ENCODE measurements at regions of chr20 and their contacts with region 1.

Region 1: DNA sequence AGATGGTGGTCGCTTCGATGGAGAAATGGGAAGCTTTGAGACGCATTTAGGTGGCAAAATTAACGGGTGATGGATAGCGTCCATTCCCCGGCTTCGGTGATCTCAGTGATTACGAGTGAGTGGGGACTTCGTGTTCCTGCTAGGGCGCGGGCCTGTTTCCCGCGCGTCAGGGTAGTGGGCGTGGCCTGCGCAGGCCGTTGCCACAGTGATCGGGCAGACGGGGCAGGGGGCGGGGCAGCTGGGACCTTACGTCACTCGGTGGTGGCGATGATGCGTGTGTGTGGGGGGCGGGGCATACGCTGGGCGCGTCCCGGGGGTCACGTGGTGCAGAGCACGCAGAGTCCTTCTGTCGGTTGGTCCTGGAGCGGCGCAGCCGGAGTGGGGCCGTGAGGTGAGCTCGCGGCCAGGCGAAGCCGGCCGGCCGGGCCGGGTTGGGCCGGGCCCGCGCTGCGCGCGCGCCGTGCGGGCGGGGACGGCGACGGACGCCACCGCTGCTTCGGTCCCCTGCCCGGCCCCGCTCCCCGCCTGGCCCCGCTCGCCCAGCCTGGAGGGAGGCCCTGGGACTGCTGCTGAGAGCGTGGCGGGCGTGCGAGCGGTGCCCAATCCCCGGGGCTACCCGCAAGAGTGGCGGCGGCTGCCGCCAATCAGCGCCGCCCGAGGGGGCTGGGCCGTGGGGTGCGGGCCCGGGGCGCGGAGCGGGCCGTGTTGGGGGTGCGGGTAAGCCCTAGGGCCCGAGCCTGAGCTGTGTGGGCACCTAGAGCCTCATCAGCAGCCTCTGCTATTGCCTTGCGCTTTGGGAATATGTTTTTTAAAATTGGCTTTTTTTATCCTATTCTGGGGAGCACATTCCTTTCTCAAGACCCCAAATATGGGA is at the start of gene PHF20:
- DNase-seq: peak; percentile 99
- ATAC-seq: peak; percentile 72 to 78
- H3K4me3 ChIP-seq: peak within 1 kb of the TSS; percentile 67 to 80 (median 72)
- H3K27ac ChIP-seq: peak within 1 kb of the TSS; percentile 85 to 95 (median 91)
- H3K4me1 ChIP-seq: peaks cover 78% of the 10 kb centered on the region in 2 donors
- H3K27me3 ChIP-seq: no peaks in the 10 kb centered on the region
- CTCF ChIP-seq: peak in 4 of 5 experiments; percentile 22 to 52 (median 36)
- POLR2A ChIP-seq: peak; percentile 98 to 99
- total RNA-seq, gene PHF20: 72.6 to 91.9 (median 82.2) TPM

Region 2: DNA sequence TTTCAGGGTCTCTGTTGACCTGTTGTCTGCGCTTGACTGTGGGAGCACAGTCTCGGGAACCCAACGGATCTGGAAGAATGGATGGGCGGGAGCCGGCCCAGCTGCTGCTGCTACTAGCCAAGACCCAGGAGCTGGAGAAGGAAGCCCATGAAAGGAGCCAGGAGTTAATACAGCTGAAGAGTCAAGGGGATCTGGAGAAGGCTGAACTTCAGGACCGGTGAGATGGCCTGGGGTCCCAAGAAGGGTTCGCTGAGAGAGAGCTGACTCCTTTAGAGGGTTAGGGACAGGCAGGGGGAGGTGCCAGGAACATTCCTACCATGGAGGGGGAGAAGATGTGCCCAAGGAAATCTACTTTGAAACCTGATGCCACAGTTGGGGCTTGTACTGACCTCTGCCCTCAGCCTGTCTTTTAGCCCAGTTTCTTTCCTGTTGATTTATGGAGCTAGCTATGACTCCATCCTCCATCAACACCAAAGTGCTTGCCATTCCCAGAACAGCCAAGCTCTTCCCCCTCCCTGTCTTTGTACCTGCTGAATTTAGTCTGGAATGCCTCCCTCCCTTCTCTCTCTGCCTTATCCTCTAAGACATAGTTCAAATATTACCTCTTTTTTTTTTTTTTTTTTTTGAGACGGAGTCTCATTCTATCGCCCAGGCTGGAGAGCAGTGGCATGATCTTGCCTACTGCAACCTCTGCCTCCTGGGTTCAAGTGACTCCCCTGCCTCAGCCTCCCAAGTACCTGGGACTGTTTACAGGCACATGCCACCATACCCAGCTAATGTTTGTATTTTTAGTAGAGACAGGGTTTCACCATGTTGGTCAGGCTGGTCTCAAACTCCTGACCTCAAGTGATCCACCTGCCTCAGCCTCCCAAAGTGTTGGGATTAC is 304.3 kb before region 1 on chr20:
- in situ Hi-C with region 1: no loop called
- intact Hi-C with region 1: no loop called
- DNase-seq: peak; percentile 5 to 63
- ATAC-seq: peak; percentile 81 to 88
- H3K4me3 ChIP-seq: no peak overlapping the region
- H3K27ac ChIP-seq: peak overlapping the region; percentile 50 to 77 (median 68)
- H3K4me1 ChIP-seq: peaks cover 17 to 25% of the 10 kb centered on the region in 2 donors
- H3K27me3 ChIP-seq: no peaks in the 10 kb centered on the region
- CTCF ChIP-seq: no peak
- POLR2A ChIP-seq: no peak

Region 3: DNA sequence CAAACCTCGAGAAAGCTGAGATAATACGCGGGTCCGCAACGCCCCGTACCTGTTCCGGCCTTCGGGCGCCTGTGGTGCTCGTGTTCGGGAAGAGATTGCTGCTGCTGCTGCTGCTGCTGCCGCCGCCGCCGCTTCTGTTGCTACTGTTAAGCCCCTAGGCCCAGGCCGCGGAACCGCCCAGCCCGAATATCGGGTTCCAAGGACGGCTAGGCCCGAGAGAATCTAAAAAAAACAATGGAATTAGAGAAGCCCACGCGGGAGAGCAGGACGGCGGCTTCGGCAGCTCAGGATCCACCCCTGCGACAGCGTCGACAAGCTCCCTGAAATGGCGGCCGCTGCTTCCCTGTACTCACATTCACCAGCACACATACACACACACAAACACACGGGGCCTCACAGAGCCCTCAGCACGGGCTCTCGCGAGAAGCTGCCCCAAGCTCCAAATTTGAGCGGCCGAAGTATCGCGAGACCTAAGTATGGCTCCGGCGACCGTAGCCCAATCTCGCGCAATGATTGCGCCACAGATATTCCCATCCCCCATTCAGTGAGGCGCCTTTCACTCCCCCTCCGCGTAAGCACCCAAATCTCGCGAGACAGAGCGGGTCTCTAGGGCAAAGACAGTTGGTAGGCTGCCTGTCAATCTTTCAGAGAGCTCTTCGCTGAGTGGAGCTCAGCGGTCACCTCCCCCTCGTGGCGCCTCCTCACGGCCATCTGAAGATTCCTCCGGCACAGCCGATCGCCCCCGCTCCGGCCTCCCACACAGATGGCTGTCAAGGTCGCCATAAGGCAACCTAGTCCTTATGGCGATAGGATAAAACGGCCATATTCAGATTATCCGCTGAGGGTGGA is 29.8 kb before region 1 on chr20 and contains the start of gene RBM39:
- in situ Hi-C with region 1: no loop called
- intact Hi-C with region 1: loop called (anchors 1 kb)
- DNase-seq: peak; percentile 100
- ATAC-seq: peak; percentile 91 to 95
- H3K4me3 ChIP-seq: peak within 1 kb of the TSS; percentile 80 to 96 (median 88)
- H3K27ac ChIP-seq: peak within 1 kb of the TSS; percentile 96 to 100 (median 98)
- H3K4me1 ChIP-seq: peaks cover 37 to 39% of the 10 kb centered on the region in 2 donors
- H3K27me3 ChIP-seq: no peaks in the 10 kb centered on the region
- CTCF ChIP-seq: peak; percentile 28 to 48 (median 39)
- POLR2A ChIP-seq: peak; percentile 97 to 98
- total RNA-seq, gene RBM39: 98.5 to 165 (median 130) TPM

Region 4: GRCh38 chr20:35828434-35828833 is 56.5 kb after region 1 on chr20:
- in situ Hi-C with region 1: no loop called
- intact Hi-C with region 1: loop called (anchors 2 kb)
- DNase-seq: peak; percentile 80 to 94
- ATAC-seq: peak; percentile 95 to 97
- H3K4me3 ChIP-seq: no peak overlapping the region
- H3K27ac ChIP-seq: peak overlapping the region; percentile 78 to 91 (median 84)
- H3K4me1 ChIP-seq: peaks cover 32 to 34% of the 10 kb centered on the region in 2 donors
- H3K27me3 ChIP-seq: no peaks in the 10 kb centered on the region
- CTCF ChIP-seq: no peak
- POLR2A ChIP-seq: no peak

Region 5: DNA sequence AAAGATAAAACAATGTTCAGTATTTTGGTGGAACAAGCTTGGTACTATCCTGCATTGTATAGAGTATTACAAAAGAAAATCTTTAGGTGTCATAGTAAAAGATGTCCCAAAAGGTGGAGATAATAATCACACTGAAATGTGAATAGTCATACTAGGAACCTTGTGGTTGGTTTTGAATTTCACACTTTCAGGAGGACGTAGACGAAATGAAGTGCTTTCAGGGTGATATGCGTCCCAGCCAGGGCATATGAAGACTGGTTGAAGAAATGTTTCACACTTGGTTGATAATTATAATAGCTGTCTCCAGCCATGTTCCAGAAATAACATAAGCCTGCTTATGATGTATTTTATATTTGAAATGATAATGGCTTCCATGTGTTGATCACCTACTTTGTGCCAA is 122.0 kb after region 1 on chr20:
- in situ Hi-C with region 1: no loop called
- intact Hi-C with region 1: no loop called
- DNase-seq: no peak
- ATAC-seq: no peak
- H3K4me3 ChIP-seq: no peak overlapping the region
- H3K27ac ChIP-seq: no peak overlapping the region
- H3K4me1 ChIP-seq: peaks cover 2 to 13% of the 10 kb centered on the region in 2 donors
- H3K27me3 ChIP-seq: no peaks in the 10 kb centered on the region
- CTCF ChIP-seq: no peak
- POLR2A ChIP-seq: no peak

Measured in gastrocnemius medialis (tissue), 4 donors.